Head of caudate nucleus (tissue), 42 donors: ENCODE measurements at regions of chr12 and their contacts with region 1.

Region 1: DNA sequence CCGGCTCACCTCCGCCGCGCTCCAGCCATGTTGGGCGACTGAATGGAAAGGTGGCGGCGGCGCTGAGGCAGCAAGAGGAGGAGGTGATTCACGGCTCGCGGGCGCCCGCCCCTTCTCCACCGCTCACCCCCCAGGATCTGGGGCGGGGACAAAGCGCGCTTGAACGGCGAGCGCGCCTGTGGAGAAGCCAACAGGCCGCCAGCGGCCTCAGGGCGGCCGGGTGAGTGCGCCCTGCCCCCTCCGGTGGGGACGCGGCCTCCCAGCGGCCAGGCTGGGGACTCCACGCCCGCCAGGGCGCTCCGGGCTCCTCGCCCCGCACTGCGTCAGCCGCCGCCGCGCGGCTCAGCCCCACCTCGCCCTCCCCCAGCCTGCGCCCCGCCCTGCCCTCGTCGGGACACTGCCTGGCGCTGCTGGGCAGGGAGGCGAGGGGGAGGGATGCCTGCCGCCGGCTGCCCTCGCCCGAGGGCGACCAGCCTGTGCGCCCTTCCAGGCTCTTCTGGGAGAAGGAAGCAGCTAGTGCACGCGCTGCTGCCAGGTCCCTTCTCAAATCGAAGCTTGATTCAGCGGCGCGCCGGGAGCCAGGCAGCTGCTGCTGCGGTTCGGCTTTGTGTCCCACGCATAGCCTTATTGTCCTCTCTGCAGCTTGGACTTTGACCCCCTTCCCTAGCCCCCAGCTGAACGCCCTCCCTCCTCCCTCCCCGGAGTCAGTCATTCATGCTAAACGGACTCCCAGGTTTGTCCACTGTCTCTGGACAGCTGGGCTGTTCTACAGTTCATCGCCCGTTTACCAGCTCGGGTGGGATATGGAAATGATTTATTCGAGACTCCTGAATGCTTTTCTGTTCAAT is at the start of gene KIF21A:
- DNase-seq: peak; percentile 64 to 94 (median 89)

Region 2: GRCh38 chr12:39354955-39355354 is 88.3 kb before region 1 on chr12:
- intact Hi-C with region 1: no loop called
- DNase-seq: no peak

Region 3: DNA sequence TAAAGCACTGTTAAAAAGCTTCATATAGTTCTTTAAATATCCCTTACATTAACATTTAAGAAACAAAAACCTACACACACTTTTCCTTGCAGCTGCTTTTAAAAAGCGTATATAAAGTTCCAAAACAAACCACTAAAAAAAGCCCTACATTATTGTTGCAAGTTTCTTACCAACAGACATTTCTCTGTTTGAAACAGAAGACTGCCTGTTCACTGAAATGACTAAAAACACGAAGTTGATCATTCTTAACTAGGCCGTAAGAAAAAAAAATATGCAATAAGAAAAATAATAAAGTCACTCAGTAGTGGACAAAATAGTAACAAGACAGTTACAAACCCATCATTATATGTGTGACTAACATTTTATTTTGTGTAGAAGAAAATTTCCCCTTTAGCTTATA is 37.7 kb before region 1 on chr12:
- intact Hi-C with region 1: loop called (anchors 5 kb)
- DNase-seq: no peak

Region 4: DNA sequence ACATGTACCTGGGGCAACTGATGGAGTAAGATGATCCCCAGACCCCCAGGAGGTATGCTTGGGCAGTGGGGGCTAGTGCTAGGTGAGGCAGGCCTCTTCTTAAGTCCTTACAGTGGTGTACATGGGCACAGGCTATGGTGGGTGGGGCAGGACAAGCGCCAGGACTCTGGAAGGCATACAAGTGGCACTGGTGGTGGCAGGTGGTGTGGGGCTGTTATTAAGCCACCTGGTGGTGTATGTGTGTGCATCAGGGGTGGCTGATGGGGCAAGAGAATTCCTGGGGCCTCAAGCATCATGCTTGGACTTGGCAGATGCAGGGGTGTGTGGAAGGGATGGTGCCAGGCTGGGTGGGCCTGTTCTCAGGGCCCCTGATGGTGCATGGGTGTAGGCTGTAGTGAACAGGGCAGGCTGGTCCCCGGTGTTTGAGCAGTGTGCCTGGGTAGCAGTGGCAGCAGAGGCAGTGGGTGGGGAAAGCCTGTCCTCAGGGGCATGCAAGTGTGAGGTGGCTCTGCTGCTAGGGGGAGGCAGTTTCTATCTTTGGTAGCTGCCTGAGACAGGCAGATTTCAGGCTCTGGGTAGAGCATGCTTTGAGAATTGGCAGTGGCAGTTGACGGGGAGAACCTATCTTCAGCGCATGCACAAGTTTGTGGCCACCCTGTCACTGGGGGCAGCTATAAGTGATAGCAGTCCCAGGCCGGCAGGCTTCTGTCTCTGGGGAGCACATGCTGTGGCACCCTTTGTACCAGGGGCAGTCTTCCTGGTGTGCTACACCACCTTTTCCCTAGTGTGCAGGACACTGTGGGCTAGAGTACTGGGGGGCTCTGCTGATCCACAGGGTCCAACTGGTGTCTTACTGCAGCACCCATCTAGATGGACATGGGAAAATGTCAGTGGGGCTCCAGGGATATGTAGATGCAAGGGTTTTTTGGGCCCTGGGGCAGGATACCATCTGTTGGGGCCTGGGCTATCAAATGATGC is 228.9 kb after region 1 on chr12:
- intact Hi-C with region 1: no loop called
- DNase-seq: no peak